ENCODE measurements at regions of chr5 and their contacts with region 1.

Region 1: GRCh38 chr5:149442563-149443182 is 63.6 kb upstream of the IL17B start:
- DNase-seq: peak in 3 of 4 donors; percentile 79 to 94 (median 84)
- ATAC-seq: peak; percentile 91
- H3K4me3 ChIP-seq: no peak overlapping the region
- H3K27ac ChIP-seq: peak overlapping the region in 1 of 2 donors; percentile 23
- H3K4me1 ChIP-seq: peaks cover 0 to 29% of the 10 kb centered on the region in 2 donors
- H3K27me3 ChIP-seq: no peaks in the 10 kb centered on the region
- CTCF ChIP-seq: peak; percentile 91 to 93

Region 2: GRCh38 chr5:149551200-149552037 is 108.7 kb after region 1 on chr5 and contains the start of gene CSNK1A1:
- intact Hi-C with region 1: loop called in 1 of 2 experiments (anchors 5 kb)
- DNase-seq: peak; percentile 99 to 100 (median 99)
- ATAC-seq: peak; percentile 96
- H3K4me3 ChIP-seq: peak within 1 kb of the TSS; percentile 89 to 94
- H3K27ac ChIP-seq: peak within 1 kb of the TSS; percentile 99
- H3K4me1 ChIP-seq: peaks cover 23 to 38% of the 10 kb centered on the region in 2 donors
- H3K27me3 ChIP-seq: no peaks in the 10 kb centered on the region
- CTCF ChIP-seq: peak; percentile 56 to 62
- polyA plus RNA-seq, gene CSNK1A1: 196 to 218 (median 203) TPM

Region 3: GRCh38 chr5:149561848-149562247 is 119.2 kb after region 1 on chr5:
- intact Hi-C with region 1: loop called (anchors 5 to 10 kb)
- DNase-seq: peak in 2 of 4 donors; percentile 43 to 65
- ATAC-seq: peak; percentile 88
- H3K4me3 ChIP-seq: no peak overlapping the region
- H3K27ac ChIP-seq: peak overlapping the region; percentile 60 to 88
- H3K4me1 ChIP-seq: peaks cover 26 to 49% of the 10 kb centered on the region in 2 donors
- H3K27me3 ChIP-seq: no peaks in the 10 kb centered on the region
- CTCF ChIP-seq: no peak

Region 4: GRCh38 chr5:149618581-149619251 is 176.0 kb after region 1 on chr5:
- intact Hi-C with region 1: loop called in 1 of 2 experiments (anchors 5 kb)
- DNase-seq: peak in 2 of 4 donors; percentile 32 to 54
- ATAC-seq: peak; percentile 89
- H3K4me3 ChIP-seq: no peak overlapping the region
- H3K27ac ChIP-seq: no peak overlapping the region
- H3K4me1 ChIP-seq: no peaks in the 10 kb centered on the region
- H3K27me3 ChIP-seq: no peaks in the 10 kb centered on the region
- CTCF ChIP-seq: peak; percentile 44 to 45